A673 (cell line): ENCODE measurements at regions of chr14 and their contacts with region 1.

Region 1: DNA sequence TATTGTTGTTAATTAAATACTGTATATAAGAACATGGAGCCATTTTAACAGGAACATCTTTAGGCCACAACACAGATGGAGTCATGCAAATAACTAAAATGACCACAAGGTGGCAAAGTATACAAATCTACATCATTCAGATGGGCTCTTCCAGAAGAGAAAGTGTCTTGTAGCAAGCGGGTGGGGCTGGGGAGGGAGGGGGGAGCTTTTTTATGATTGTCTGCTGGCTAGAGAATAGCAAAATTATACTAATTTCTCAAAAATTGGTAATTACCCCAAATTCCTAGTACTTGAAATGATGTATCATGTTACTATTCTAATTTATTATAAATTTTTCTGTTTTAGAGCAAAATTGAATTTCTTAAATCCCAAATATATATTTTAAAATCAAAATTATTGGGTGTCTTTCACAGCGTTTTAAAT is 378.7 kb downstream of the PRKD1 start:
- DNase-seq: peak; percentile 78
- H3K4me3 ChIP-seq: no peak overlapping the region
- H3K27ac ChIP-seq: no peak overlapping the region
- H3K4me1 ChIP-seq: no peaks in the 10 kb centered on the region
- H3K27me3 ChIP-seq: peaks cover 5% of the 10 kb centered on the region
- CTCF ChIP-seq: peak; percentile 78

Region 2: GRCh38 chr14:28820677-28821076 is 728.3 kb before region 1 on chr14:
- CTCF ChIA-PET with region 1: no interaction called
- POLR2A ChIA-PET with region 1: no interaction called
- intact Hi-C with region 1: no loop called
- DNase-seq: no peak
- H3K4me3 ChIP-seq: no peak overlapping the region
- H3K27ac ChIP-seq: no peak overlapping the region
- H3K4me1 ChIP-seq: no peaks in the 10 kb centered on the region
- H3K27me3 ChIP-seq: peaks cover 9% of the 10 kb centered on the region
- CTCF ChIP-seq: no peak

Region 3: DNA sequence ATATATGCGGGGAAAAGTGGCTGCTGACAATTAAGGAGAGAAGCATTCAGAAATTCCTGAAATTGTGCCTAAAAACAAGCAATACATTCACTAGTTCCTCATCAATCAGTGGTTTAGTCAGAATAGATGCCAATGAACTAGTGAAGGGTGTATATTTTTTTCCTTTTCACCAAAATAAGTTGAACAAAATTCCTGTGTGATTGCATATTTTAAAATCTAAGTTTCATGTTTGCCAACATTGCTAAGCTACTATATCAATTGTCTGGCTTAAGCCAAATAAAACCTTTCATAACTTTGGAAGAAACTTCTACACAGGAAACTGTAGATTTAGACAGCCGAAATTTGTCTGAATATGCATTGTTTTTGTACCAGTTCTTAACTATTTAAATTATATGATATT is 370.0 kb after region 1 on chr14:
- CTCF ChIA-PET with region 1: no interaction called
- POLR2A ChIA-PET with region 1: no interaction called
- intact Hi-C with region 1: loop called (anchors 5 kb)
- DNase-seq: peak; percentile 45
- H3K4me3 ChIP-seq: no peak overlapping the region
- H3K27ac ChIP-seq: peak overlapping the region; percentile 86
- H3K4me1 ChIP-seq: peaks cover 68% of the 10 kb centered on the region
- H3K27me3 ChIP-seq: no peaks in the 10 kb centered on the region
- CTCF ChIP-seq: no peak

Region 4: GRCh38 chr14:29930283-29930682 is 381.3 kb after region 1 on chr14:
- CTCF ChIA-PET with region 1: no interaction called
- POLR2A ChIA-PET with region 1: no interaction called
- intact Hi-C with region 1: no loop called
- DNase-seq: peak; percentile 90
- H3K4me3 ChIP-seq: no peak overlapping the region
- H3K27ac ChIP-seq: peak overlapping the region; percentile 74
- H3K4me1 ChIP-seq: peaks cover 24% of the 10 kb centered on the region
- H3K27me3 ChIP-seq: no peaks in the 10 kb centered on the region
- CTCF ChIP-seq: no peak

Region 5: DNA sequence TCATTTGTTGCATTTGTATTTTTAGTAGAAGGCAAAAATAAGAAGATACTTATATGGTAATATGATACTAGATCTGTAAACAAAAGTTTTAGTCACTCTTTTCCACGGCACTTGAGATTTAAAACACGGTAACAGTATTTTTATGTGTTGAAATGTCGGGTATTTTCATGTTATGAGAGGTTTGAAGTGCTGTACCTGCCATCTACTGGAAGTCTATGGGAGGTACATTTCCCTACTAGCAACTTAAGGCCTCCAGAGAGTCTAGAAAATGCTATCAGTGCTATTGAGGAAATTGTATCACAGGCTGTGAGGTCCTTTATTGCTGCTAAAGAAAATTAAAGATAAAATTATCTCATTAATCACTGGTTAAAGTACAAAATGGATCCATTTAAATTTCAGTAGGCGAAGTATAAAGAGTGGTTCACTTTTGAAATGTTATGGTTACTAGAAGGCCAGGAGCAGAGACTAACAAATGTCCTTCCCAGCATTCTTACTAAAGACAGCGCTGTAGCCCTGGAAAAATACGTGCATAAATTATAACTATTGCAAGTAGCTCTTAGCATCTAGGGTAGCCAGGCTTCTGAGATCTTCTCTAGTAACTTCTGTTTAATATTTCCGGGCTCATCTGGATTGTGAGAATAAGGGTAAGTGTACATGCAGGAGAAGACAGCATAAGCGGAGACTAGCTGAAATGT is 456.3 kb after region 1 on chr14:
- CTCF ChIA-PET with region 1: interaction called, 4 read pairs
- POLR2A ChIA-PET with region 1: no interaction called
- intact Hi-C with region 1: loop called (anchors 1 kb)
- DNase-seq: peak; percentile 77
- H3K4me3 ChIP-seq: no peak overlapping the region
- H3K27ac ChIP-seq: no peak overlapping the region
- H3K4me1 ChIP-seq: peaks cover 21% of the 10 kb centered on the region
- H3K27me3 ChIP-seq: no peaks in the 10 kb centered on the region
- CTCF ChIP-seq: peak; percentile 81

Region 6: GRCh38 chr14:30214461-30215090 is 665.6 kb after region 1 on chr14:
- CTCF ChIA-PET with region 1: no interaction called
- POLR2A ChIA-PET with region 1: no interaction called
- intact Hi-C with region 1: loop called (anchors 1 kb)
- DNase-seq: peak; percentile 72
- H3K4me3 ChIP-seq: no peak overlapping the region
- H3K27ac ChIP-seq: no peak overlapping the region
- H3K4me1 ChIP-seq: no peaks in the 10 kb centered on the region
- H3K27me3 ChIP-seq: peaks cover 3% of the 10 kb centered on the region
- CTCF ChIP-seq: peak; percentile 76

Region 7: GRCh38 chr14:30443368-30444007 is 894.5 kb after region 1 on chr14:
- CTCF ChIA-PET with region 1: no interaction called
- POLR2A ChIA-PET with region 1: no interaction called
- intact Hi-C with region 1: loop called (anchors 10 kb)
- DNase-seq: peak; percentile 59
- H3K4me3 ChIP-seq: no peak overlapping the region
- H3K27ac ChIP-seq: no peak overlapping the region
- H3K4me1 ChIP-seq: no peaks in the 10 kb centered on the region
- H3K27me3 ChIP-seq: peaks cover 39% of the 10 kb centered on the region
- CTCF ChIP-seq: peak; percentile 69